ENCODE measurements at regions of chr17 and their contacts with region 1.

Region 1: GRCh38 chr17:8753976-8754440 is 4.3 kb downstream of the SPDYE4 start:
- DNase-seq: no peak

Region 2: GRCh38 chr17:8740486-8740885 is 13.5 kb before region 1 on chr17:
- intact Hi-C with region 1: no loop called
- DNase-seq: no peak

Region 3: DNA sequence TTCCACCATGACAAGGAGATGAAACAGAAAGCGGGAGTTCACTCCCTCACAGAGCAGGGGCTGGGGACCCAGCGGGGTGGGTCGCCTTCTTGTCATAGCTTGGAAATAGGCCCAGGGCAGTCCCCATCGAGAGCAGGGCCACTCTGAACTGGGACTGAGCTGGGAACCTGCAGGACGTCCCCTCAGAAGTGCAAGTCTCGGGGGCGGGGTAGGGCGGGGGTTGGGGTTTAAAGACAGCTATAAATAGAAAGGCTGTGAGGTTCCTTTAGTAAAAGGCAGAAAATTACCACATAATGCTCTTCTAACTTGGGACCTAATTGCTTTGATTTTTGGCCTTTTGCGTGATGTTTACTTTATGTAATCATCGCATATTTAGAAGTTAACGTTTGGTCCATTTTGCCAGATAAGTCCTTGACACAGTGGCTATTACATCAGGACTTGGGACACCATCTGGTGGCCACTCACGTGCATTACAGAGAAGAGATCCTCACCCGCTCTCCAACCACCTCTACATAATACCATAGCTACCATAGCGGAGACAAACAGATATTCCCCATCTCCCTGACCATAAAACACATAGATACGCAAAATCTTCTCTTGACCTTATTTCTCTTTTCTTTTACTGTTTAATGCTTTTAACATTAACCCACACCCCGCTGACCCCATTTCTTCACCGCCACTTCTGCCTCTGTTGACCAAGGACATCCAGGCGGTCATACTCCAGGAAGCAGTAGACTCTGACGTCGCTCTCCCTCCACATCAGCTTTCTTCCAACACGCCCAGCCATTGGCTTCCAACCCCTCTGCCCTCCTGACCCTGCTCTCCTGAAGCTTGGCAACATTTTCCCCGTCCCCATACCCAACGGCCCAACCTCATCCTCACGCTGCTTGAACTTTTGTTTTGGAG is 140.9 kb after region 1 on chr17:
- intact Hi-C with region 1: loop called (anchors 10 kb)
- DNase-seq: peak in 6 of 10 donors; percentile 32 to 77 (median 49)

Region 4: DNA sequence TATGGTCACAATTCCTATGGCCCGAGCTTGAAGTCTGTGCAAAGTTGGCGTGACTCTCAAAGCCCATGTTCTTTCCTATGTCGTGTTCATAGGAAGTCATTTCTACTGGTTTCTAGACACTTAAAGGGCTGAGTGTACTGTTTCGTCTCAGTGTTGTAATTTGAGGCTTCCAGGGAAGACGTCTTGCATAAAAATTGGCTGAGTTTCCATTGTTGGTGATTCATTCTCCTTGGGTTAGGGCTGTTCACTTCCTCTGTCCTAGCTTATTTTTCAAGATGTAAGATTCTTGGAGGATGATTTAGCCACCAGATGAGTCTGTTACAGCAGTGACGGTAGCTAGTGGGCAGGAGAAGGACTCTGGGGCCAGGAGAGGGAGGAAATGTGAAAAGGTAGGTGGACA is 168.4 kb after region 1 on chr17:
- intact Hi-C with region 1: no loop called
- DNase-seq: peak in 1 of 10 donors; percentile 3

Measured in posterior cingulate gyrus (tissue), 11 donors.